MCF 10A (cell line): ENCODE measurements at regions of chrX and their contacts with region 1.

Region 1: GRCh38 chrX:50988649-50989048 is 78.1 kb downstream of the BMP15 start:
- DNase-seq: peak; percentile 62
- H3K4me3 Mint-ChIP-seq: no peak overlapping the region
- H3K27ac Mint-ChIP-seq: no peak overlapping the region
- H3K4me1 Mint-ChIP-seq: no peaks in the 10 kb centered on the region
- H3K27me3 Mint-ChIP-seq: peaks cover 61% of the 10 kb centered on the region
- CTCF ChIP-seq: peak; percentile 56

Region 2: GRCh38 chrX:50747471-50747900 is 241.2 kb before region 1 on chrX:
- CTCF ChIA-PET with region 1: interaction called, 57 read pairs
- POLR2A ChIA-PET with region 1: no interaction called
- intact Hi-C with region 1: loop called (anchors 2 kb)
- DNase-seq: peak; percentile 47
- H3K4me3 Mint-ChIP-seq: no peak overlapping the region
- H3K27ac Mint-ChIP-seq: no peak overlapping the region
- H3K4me1 Mint-ChIP-seq: no peaks in the 10 kb centered on the region
- H3K27me3 Mint-ChIP-seq: peaks cover 86% of the 10 kb centered on the region
- CTCF ChIP-seq: peak; percentile 85

Region 3: DNA sequence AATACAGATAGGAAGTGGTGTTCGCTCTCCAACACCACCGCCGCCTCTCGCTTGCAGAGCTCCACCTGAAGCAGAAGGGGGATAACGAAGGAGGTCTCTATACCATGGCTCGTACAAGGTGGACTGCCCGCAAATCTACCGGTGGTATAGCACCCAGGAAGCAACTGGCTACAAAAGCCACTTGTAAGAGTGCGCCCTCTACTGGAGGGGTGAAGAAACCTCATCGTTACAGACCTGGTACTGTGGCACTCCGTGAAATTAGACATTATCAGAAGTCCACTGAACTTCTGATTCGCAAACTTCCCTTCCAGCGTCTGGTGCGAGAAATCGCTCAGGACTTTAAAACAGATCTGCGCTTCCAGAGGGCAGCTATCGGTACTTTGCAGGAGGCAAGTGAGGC is 83.3 kb before region 1 on chrX:
- CTCF ChIA-PET with region 1: interaction called, 14 read pairs
- POLR2A ChIA-PET with region 1: no interaction called
- intact Hi-C with region 1: loop called (anchors 2 kb)
- DNase-seq: peak; percentile 34
- H3K4me3 Mint-ChIP-seq: no peak overlapping the region
- H3K27ac Mint-ChIP-seq: no peak overlapping the region
- H3K4me1 Mint-ChIP-seq: no peaks in the 10 kb centered on the region
- H3K27me3 Mint-ChIP-seq: peaks cover 13% of the 10 kb centered on the region
- CTCF ChIP-seq: peak; percentile 65

Region 4: GRCh38 chrX:50920132-50920531 is 68.5 kb before region 1 on chrX:
- CTCF ChIA-PET with region 1: interaction called, 24 read pairs
- POLR2A ChIA-PET with region 1: no interaction called
- intact Hi-C with region 1: loop called (anchors 2 kb)
- DNase-seq: peak; percentile 42
- H3K4me3 Mint-ChIP-seq: no peak overlapping the region
- H3K27ac Mint-ChIP-seq: no peak overlapping the region
- H3K4me1 Mint-ChIP-seq: no peaks in the 10 kb centered on the region
- H3K27me3 Mint-ChIP-seq: peaks cover 64% of the 10 kb centered on the region
- CTCF ChIP-seq: peak; percentile 53

Region 5: GRCh38 chrX:50941638-50942037 is 47.0 kb before region 1 on chrX:
- CTCF ChIA-PET with region 1: interaction called, 5 read pairs
- POLR2A ChIA-PET with region 1: no interaction called
- intact Hi-C with region 1: loop called (anchors 2 kb)
- DNase-seq: peak; percentile 36
- H3K4me3 Mint-ChIP-seq: no peak overlapping the region
- H3K27ac Mint-ChIP-seq: no peak overlapping the region
- H3K4me1 Mint-ChIP-seq: no peaks in the 10 kb centered on the region
- H3K27me3 Mint-ChIP-seq: peaks cover 62% of the 10 kb centered on the region
- CTCF ChIP-seq: peak; percentile 50

Region 6: GRCh38 chrX:50963842-50964241 is 24.8 kb before region 1 on chrX:
- CTCF ChIA-PET with region 1: interaction called, 12 read pairs
- POLR2A ChIA-PET with region 1: interaction called, 3 read pairs
- intact Hi-C with region 1: no loop called
- DNase-seq: no peak
- H3K4me3 Mint-ChIP-seq: no peak overlapping the region
- H3K27ac Mint-ChIP-seq: no peak overlapping the region
- H3K4me1 Mint-ChIP-seq: peaks cover 9% of the 10 kb centered on the region
- H3K27me3 Mint-ChIP-seq: peaks cover 56% of the 10 kb centered on the region
- CTCF ChIP-seq: no peak

Region 7: GRCh38 chrX:50971395-50971794 is 17.3 kb before region 1 on chrX:
- CTCF ChIA-PET with region 1: interaction called, 14 read pairs
- POLR2A ChIA-PET with region 1: interaction called, 3 read pairs
- intact Hi-C with region 1: no loop called
- DNase-seq: peak; percentile 48
- H3K4me3 Mint-ChIP-seq: no peak overlapping the region
- H3K27ac Mint-ChIP-seq: peak overlapping the region; percentile 57
- H3K4me1 Mint-ChIP-seq: peaks cover 15% of the 10 kb centered on the region
- H3K27me3 Mint-ChIP-seq: peaks cover 9% of the 10 kb centered on the region
- CTCF ChIP-seq: no peak

Region 8: DNA sequence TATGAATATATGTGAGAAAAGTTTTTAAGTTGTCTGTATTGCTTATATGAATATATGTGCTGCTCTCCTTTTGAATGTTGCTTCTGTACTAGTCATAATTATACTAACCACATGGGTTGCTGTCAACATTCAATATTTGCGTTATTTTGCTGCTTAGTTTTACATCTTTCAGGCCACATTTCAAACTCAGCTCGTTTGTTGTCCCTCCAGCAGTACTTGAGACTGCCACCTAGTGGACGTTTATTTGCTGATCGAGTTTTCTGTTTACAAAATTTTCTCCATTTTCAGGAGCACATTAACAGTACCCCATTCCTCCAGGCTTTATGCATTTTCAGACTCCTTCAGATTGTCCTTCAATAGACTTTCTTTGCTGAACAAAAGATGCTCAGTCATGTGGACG is 432.0 kb after region 1 on chrX:
- CTCF ChIA-PET with region 1: no interaction called
- POLR2A ChIA-PET with region 1: no interaction called
- intact Hi-C with region 1: no loop called
- DNase-seq: peak; percentile 60
- H3K4me3 Mint-ChIP-seq: no peak overlapping the region
- H3K27ac Mint-ChIP-seq: no peak overlapping the region
- H3K4me1 Mint-ChIP-seq: no peaks in the 10 kb centered on the region
- H3K27me3 Mint-ChIP-seq: peaks cover 38% of the 10 kb centered on the region
- CTCF ChIP-seq: peak; percentile 50